Activated CD4-positive, alpha-beta memory T cell treated with anti-CD3 and anti-CD28 coated beads for 36 hours (primary cell): ENCODE measurements at regions of chr12 and their contacts with region 1.

Region 1: GRCh38 chr12:118120579-118121363 is 15.2 kb upstream of the PEBP1 start:
- DNase-seq: peak; percentile 81
- H3K4me3 Mint-ChIP-seq: no peak overlapping the region
- H3K27ac Mint-ChIP-seq: peak overlapping the region; percentile 20
- H3K4me1 Mint-ChIP-seq: peaks cover 11% of the 10 kb centered on the region
- H3K27me3 Mint-ChIP-seq: no peaks in the 10 kb centered on the region

Region 2: GRCh38 chr12:118175823-118176447 is 55.2 kb after region 1 on chr12:
- CTCF ChIA-PET with region 1: interaction called, 11 read pairs
- POLR2A ChIA-PET with region 1: no interaction called
- intact Hi-C with region 1: no loop called
- DNase-seq: no peak
- H3K4me3 Mint-ChIP-seq: no peak overlapping the region
- H3K27ac Mint-ChIP-seq: no peak overlapping the region
- H3K4me1 Mint-ChIP-seq: no peaks in the 10 kb centered on the region
- H3K27me3 Mint-ChIP-seq: no peaks in the 10 kb centered on the region